Psoas muscle (tissue), 8 donors: ENCODE measurements at regions of chr1 and their contacts with region 1.

Region 1: DNA sequence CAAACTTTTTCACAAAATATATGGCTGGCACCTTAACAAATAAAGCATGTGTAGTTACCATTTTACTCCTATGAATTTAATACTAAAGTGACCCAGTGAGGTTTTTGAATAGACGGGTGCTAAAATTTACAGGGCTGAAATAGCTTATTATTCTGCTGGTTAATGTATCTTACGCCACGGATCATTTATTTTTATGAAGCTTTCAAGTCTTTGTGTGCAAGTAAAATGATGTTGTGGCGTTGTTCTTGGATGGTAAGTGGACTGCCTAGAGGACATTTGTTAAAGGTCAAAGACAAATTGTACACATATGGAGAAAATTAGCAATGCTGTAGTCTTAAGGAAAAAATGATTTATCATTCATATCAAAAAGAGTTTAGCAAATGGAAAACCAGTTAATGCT is 22.8 kb downstream of the INSL5 start:
- DNase-seq: no peak
- ATAC-seq: no peak
- H3K4me3 ChIP-seq: no peak overlapping the region
- H3K27ac ChIP-seq: no peak overlapping the region
- H3K4me1 ChIP-seq: no peaks in the 10 kb centered on the region
- H3K27me3 ChIP-seq: no peaks in the 10 kb centered on the region
- CTCF ChIP-seq: no peak

Region 2: DNA sequence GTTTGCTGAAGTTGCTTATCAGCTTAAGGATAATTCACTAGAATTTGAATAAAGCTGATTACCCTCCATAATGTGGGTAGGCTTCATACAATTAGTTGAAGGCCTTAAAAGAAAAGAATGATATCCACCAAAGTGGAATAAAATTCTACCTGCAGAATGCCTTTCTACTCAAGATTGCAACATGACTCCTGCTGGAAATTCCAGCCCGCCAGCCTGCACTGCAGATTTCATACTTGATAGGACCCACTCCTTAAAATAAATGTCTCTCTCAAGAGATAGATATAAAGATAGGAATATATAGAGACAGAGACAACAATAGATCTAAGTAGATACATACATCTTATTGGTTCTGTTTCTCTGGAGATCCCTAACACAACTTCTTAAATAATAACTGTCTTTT is 46.5 kb after region 1 on chr1:
- intact Hi-C with region 1: loop called in 1 of 2 experiments (anchors 5 kb)
- DNase-seq: no peak
- ATAC-seq: no peak
- H3K4me3 ChIP-seq: no peak overlapping the region
- H3K27ac ChIP-seq: no peak overlapping the region
- H3K4me1 ChIP-seq: no peaks in the 10 kb centered on the region
- H3K27me3 ChIP-seq: no peaks in the 10 kb centered on the region
- CTCF ChIP-seq: no peak

Region 3: GRCh38 chr1:67149179-67149770 is 371.0 kb after region 1 on chr1:
- intact Hi-C with region 1: no loop called
- DNase-seq: peak; percentile 47 to 64
- ATAC-seq: peak; percentile 88 to 100 (median 96)
- H3K4me3 ChIP-seq: no peak overlapping the region
- H3K27ac ChIP-seq: no peak overlapping the region
- H3K4me1 ChIP-seq: no peaks in the 10 kb centered on the region
- H3K27me3 ChIP-seq: no peaks in the 10 kb centered on the region
- CTCF ChIP-seq: peak; percentile 82